ENCODE measurements at regions of chr5 and their contacts with region 1.

Region 1: GRCh38 chr5:142874537-142874936 is 104.4 kb downstream of the ARHGAP26 start:
- DNase-seq: peak; percentile 93 to 96
- ATAC-seq: peak; percentile 79
- H3K4me3 ChIP-seq: no peak overlapping the region
- H3K27ac ChIP-seq: peak overlapping the region in 1 of 2 donors; percentile 73
- H3K4me1 ChIP-seq: peaks cover 3 to 4% of the 10 kb centered on the region in 2 donors
- H3K27me3 ChIP-seq: no peaks in the 10 kb centered on the region

Region 2: DNA sequence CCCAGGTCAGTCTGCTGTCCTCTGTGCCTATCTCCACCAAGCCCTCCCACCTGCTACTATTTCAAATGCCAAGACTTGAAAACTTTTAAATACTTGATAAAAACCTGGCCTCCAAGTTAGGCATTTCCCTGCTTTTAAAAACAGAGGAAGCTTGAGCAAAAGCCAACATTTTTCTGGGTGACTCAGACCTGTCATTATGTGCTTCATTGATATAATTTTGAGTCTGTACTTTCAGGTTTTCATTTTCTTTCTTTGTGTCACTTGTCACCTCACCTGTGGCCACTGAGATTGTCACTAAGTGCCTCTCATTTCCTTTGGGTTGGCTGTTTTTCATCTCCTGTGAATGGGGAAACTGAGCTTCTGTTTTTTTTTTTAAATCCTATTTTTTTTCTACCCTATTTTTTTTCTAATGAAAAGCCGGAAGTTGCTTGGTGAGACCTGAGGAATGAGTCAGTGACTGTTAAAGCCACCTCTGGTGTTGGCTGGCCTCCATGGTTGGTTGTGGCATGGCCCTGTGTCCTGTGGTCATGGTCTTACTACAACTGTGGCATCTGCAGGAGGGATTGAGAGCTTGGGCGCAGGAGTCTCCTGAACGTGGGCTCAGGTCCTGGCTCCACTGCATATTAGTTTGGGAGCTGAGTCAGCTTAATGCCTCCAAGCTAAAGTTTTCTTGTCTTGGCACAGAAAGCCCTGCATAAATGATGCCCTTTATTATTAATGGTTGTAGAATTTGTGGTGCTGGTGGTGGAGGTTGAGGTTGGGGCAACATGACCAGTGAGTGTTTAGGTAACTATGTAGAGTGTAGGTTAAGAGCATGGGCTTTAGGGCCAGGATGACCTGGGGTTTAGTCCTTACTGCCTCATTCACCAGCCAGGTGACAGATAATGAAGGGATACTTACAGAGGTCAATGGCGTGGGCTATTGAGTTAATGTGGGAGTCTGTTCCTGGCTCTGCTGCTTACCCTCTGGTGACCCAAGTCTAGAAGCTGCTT is 47.5 kb before region 1 on chr5:
- intact Hi-C with region 1: loop called in 1 of 2 experiments (anchors 5 kb)
- DNase-seq: peak; percentile 78 to 82
- ATAC-seq: peak; percentile 60
- H3K4me3 ChIP-seq: no peak overlapping the region
- H3K27ac ChIP-seq: peak overlapping the region in 1 of 2 donors; percentile 42
- H3K4me1 ChIP-seq: peaks cover 2 to 7% of the 10 kb centered on the region in 2 donors
- H3K27me3 ChIP-seq: no peaks in the 10 kb centered on the region

Region 3: GRCh38 chr5:142857405-142857804 is 17.1 kb before region 1 on chr5:
- intact Hi-C with region 1: no loop called
- DNase-seq: no peak
- ATAC-seq: no peak
- H3K4me3 ChIP-seq: no peak overlapping the region
- H3K27ac ChIP-seq: no peak overlapping the region
- H3K4me1 ChIP-seq: peaks cover 0 to 3% of the 10 kb centered on the region in 2 donors
- H3K27me3 ChIP-seq: no peaks in the 10 kb centered on the region

Region 4: DNA sequence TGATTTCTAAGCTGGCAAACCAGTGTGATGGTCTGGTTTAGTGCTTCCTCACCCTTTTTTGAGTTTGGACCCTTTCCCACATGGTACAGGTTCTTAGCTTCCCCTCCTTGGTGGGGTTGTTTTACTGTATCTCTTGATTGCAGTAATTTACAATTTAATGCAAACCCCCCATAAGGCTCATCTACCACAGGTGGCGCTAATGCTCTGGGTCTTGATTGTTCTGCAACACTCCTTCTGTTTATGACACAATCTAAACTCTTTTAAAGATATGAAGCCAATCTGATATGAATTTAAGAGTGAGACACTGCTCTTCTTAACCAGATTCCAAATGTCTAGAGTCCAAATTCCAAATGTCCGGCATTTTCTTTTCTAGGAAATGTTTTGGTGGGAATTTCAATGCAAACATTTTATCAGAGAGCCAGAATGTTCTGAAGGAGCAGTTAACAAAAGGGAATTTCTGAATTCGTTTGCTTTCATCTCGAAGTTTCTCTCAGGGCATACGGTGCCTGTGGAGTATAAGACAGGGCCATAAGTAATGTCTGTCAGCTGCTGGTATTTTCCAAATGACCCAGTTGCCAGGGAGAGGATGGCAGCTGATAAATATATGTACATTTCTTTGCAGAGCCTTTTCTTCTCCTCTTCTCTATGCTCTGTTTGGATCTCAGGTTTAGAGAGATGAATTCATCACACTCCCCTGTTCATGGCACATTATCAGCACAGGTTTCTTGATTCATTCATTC is 142.4 kb after region 1 on chr5:
- intact Hi-C with region 1: no loop called
- DNase-seq: no peak
- ATAC-seq: no peak
- H3K4me3 ChIP-seq: no peak overlapping the region
- H3K27ac ChIP-seq: no peak overlapping the region
- H3K4me1 ChIP-seq: no peaks in the 10 kb centered on the region
- H3K27me3 ChIP-seq: no peaks in the 10 kb centered on the region

Region 5: GRCh38 chr5:143413958-143414669 is 539.6 kb after region 1 on chr5:
- intact Hi-C with region 1: no loop called
- DNase-seq: no peak
- ATAC-seq: no peak
- H3K4me3 ChIP-seq: no peak overlapping the region
- H3K27ac ChIP-seq: no peak overlapping the region
- H3K4me1 ChIP-seq: no peaks in the 10 kb centered on the region
- H3K27me3 ChIP-seq: no peaks in the 10 kb centered on the region

Measured in aorta (tissue), 5 donors.